ENCODE measurements at regions of chr16 and their contacts with region 1.

Region 1: DNA sequence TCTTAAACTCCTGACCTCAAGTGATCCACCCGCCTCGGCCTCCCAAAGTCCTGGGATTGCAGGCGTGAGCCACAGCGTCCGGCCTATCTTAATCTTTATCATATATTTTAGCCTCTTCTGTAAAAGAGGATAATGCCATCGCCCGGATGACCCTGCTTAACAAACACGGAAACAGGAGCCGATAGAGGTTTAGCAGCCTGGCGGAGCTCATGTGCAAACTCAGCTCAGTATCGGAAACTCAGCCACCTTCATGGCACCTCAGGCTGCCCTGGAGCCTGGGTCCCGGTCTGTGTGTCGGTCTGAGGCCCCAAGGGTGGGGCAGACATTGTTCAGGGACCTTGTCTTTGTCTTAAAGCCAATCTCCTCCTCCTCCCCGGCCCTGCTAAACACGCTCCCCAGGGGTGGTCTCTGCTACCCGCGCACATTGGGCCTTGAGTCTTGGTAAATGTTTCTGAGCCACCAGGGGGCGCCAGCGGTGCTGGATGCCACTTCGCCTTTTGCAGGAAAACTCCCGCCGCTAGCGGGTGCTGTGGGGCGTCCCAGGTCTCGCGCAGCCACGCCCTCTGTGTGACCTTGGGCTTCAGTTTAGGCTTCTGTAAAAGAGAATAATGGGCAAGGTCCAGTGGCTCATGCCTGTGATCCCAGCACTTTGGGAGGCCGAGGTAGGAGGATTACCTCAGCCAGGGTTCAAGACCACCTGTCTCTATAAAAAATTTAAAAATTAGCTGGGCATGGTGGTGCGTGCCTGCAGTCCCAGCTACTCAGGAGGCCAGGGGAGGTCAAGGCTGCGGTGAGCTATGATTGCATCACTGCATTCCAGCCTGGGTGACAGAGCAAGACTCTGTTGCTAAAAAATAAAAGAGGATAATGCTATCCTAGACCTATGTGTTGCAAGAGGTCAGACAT is 2.7 kb downstream of the CETP start:
- DNase-seq: peak; percentile 97
- ATAC-seq: peak; percentile 90
- H3K4me3 Mint-ChIP-seq: no peak overlapping the region
- H3K27ac Mint-ChIP-seq: peak overlapping the region; percentile 68
- H3K4me1 Mint-ChIP-seq: peaks cover 22% of the 10 kb centered on the region
- H3K27me3 Mint-ChIP-seq: peaks cover 2% of the 10 kb centered on the region

Region 2: DNA sequence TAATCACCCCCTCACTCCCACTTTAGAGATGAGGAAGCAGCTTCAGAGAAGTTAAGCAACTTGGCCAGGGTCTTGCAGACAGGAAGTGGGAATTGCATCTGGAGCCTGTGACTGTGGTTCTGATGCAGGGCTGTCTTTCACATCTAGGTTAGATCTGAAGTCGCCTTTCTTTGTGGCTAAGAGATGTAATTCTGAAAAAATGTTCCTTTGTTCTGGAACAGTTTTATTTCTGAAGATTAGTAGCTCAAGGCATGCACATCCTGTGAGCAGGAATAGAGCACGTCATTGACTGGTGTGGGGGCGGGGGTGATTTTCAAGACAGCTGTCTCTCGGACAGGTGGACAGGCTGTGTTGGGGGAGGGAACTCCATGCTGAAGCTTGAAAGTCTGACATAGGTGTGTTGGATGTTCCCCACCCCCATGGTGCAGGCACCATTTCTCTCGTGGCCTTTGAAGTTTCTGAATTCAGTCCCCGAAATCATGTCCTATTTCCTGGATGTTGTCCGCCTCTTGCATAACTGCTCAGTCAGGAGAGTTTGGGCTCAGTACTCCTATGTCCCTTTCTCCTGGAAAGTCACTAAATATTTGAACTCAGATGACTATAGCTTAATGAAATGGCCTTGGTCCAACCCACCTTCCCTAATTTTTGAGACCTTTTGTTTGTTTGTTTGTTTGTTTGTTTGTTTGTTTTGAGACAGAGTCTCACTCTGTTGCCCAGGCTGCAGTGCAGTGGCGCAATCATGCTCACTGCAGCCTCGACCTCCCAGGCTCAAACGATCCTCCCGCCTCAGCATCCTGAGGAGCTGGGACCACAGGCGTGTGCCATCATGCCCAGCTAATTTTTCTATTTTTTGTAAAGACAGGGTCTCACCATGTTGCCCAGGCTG is 53.6 kb before region 1 on chr16:
- CTCF ChIA-PET with region 1: no interaction called
- POLR2A ChIA-PET with region 1: no interaction called
- DNase-seq: no peak
- ATAC-seq: peak; percentile 30
- H3K4me3 Mint-ChIP-seq: no peak overlapping the region
- H3K27ac Mint-ChIP-seq: no peak overlapping the region
- H3K4me1 Mint-ChIP-seq: peaks cover 26% of the 10 kb centered on the region
- H3K27me3 Mint-ChIP-seq: peaks cover 7% of the 10 kb centered on the region

Region 3: GRCh38 chr16:56931892-56932720 is 32.4 kb before region 1 on chr16 and contains the start of gene HERPUD1:
- CTCF ChIA-PET with region 1: interaction called, 10 read pairs
- POLR2A ChIA-PET with region 1: interaction called, 8 read pairs
- DNase-seq: peak; percentile 99
- ATAC-seq: peak; percentile 94
- H3K4me3 Mint-ChIP-seq: peak within 1 kb of the TSS; percentile 99
- H3K27ac Mint-ChIP-seq: peak within 1 kb of the TSS; percentile 99
- H3K4me1 Mint-ChIP-seq: peaks cover 45% of the 10 kb centered on the region
- H3K27me3 Mint-ChIP-seq: peaks cover 5% of the 10 kb centered on the region
- total RNA-seq, gene HERPUD1: 88.2 to 95.2 TPM

Region 4: GRCh38 chr16:56944954-56945839 is 19.3 kb before region 1 on chr16:
- CTCF ChIA-PET with region 1: interaction called, 63 read pairs
- POLR2A ChIA-PET with region 1: interaction called, 3 read pairs
- DNase-seq: no peak
- ATAC-seq: no peak
- H3K4me3 Mint-ChIP-seq: no peak overlapping the region
- H3K27ac Mint-ChIP-seq: peak overlapping the region; percentile 11
- H3K4me1 Mint-ChIP-seq: peaks cover 21% of the 10 kb centered on the region
- H3K27me3 Mint-ChIP-seq: no peaks in the 10 kb centered on the region

Region 5: GRCh38 chr16:56980792-56981724 is 16.6 kb after region 1 on chr16:
- CTCF ChIA-PET with region 1: interaction called, 107 read pairs
- POLR2A ChIA-PET with region 1: interaction called, 4 read pairs
- DNase-seq: no peak
- ATAC-seq: peak; percentile 40
- H3K4me3 Mint-ChIP-seq: peak overlapping the region; percentile 29
- H3K27ac Mint-ChIP-seq: peak overlapping the region; percentile 66
- H3K4me1 Mint-ChIP-seq: peaks cover 70% of the 10 kb centered on the region
- H3K27me3 Mint-ChIP-seq: no peaks in the 10 kb centered on the region

Region 6: DNA sequence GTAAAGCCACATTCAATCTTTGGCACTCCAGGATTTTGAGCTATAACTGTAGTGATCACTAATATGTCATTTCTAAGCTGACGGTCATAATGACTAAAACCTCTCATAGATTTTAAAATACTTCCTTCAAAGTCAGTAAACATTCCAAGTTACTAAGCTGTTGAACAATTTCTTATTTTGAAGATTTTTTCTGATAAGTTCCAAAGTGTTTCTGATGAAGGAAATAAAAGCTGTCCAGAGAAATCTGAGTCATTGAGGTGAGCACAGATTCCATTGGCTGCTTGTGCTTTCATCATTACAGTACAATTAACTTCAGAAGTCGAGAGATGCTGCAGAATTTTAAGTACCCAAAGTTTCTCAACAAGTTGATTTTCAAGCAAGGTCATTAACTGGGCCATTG is 48.7 kb after region 1 on chr16:
- CTCF ChIA-PET with region 1: interaction called, 23 read pairs
- POLR2A ChIA-PET with region 1: no interaction called
- DNase-seq: no peak
- ATAC-seq: no peak
- H3K4me3 Mint-ChIP-seq: peak overlapping the region; percentile 59
- H3K27ac Mint-ChIP-seq: peak overlapping the region; percentile 83
- H3K4me1 Mint-ChIP-seq: peaks cover 82% of the 10 kb centered on the region
- H3K27me3 Mint-ChIP-seq: no peaks in the 10 kb centered on the region

Region 7: DNA sequence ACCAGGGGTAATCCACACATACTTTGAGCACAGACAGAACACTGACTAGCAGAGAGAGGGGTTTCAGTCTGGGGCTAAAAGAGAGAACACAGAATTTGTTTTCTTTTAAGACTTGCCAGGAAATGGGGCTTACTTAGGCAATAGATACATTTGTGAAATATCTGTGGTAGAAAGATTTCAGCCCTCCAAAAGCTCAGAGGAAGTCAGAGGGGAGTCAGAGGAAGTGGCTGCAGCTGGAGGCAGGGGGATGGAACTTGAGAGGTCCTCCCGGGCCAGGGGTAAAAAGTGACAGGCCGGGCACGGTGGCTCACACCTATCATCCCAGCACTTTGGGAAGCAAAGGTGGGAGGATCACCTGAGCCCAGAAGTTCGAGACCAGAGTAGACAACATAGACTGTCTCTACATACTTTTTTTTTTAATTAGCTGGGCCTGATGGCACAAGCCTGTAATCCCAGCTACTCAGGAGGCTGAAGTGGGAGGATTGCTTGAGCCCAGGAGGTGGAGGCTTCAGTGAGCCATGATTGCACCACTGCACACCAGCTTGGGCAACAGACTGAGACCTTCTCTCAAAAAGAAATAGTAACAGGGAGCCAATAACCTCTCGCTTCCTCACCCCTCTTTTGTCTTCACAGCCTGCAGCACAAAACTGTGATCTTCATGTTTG is 74.8 kb after region 1 on chr16:
- CTCF ChIA-PET with region 1: interaction called, 89 read pairs
- POLR2A ChIA-PET with region 1: interaction called, 25 read pairs
- DNase-seq: peak; percentile 70
- ATAC-seq: peak; percentile 13
- H3K4me3 Mint-ChIP-seq: peak overlapping the region; percentile 64
- H3K27ac Mint-ChIP-seq: peak overlapping the region; percentile 97
- H3K4me1 Mint-ChIP-seq: peaks cover 91% of the 10 kb centered on the region
- H3K27me3 Mint-ChIP-seq: no peaks in the 10 kb centered on the region

Region 8: DNA sequence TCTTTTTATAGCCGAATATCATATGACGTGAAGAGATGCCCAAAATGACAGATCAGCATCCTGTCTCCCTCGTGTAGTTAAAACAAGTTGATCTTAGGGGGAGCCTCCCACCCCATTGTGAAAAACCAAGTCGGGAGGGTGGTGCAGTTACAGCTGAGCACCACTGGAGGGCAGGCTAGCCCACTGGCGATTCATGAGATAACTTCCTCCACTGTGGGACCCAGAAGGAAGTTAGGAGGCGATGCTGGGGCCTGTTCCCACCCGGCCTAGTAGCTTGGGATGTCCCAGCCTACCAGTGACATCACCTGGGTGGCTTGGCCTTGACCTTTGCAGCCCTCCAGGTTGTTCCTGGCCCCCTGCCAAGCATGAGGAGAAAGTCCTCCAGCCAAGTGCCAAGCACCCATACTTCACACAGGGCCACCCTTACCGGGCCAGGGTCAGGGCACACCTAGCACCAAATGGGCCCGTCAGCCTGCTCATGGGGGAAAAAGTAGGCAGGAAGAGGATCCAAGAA is 119.8 kb after region 1 on chr16:
- CTCF ChIA-PET with region 1: interaction called, 18 read pairs
- POLR2A ChIA-PET with region 1: no interaction called
- DNase-seq: peak; percentile 87
- ATAC-seq: peak; percentile 75
- H3K4me3 Mint-ChIP-seq: no peak overlapping the region
- H3K27ac Mint-ChIP-seq: peak overlapping the region; percentile 74
- H3K4me1 Mint-ChIP-seq: peaks cover 8% of the 10 kb centered on the region
- H3K27me3 Mint-ChIP-seq: peaks cover 5% of the 10 kb centered on the region

Measured in activated CD8-positive, alpha-beta T cell treated with anti-CD3 and anti-CD28 coated beads, Interleukin-2, amount 10 ng/mL, durations not matched to agents 7 days and 5 days (primary cell).